ENCODE measurements at regions of chr17 and their contacts with region 1.

Region 1: GRCh38 chr17:49952209-49952911 is 16.6 kb upstream of the DLX4 start:
- DNase-seq: peak; percentile 87
- H3K4me3 ChIP-seq: peak overlapping the region in 1 of 2 experiments; percentile 1; a peak in 1 of 4 replicates
- H3K27ac ChIP-seq: no peak overlapping the region
- H3K4me1 ChIP-seq: no peaks in the 10 kb centered on the region
- H3K27me3 ChIP-seq: peaks cover 81% of the 10 kb centered on the region
- CTCF ChIP-seq: peak; percentile 99
- EP300 ChIP-seq: no peak
- RAD21 ChIP-seq: peak; percentile 74

Region 2: DNA sequence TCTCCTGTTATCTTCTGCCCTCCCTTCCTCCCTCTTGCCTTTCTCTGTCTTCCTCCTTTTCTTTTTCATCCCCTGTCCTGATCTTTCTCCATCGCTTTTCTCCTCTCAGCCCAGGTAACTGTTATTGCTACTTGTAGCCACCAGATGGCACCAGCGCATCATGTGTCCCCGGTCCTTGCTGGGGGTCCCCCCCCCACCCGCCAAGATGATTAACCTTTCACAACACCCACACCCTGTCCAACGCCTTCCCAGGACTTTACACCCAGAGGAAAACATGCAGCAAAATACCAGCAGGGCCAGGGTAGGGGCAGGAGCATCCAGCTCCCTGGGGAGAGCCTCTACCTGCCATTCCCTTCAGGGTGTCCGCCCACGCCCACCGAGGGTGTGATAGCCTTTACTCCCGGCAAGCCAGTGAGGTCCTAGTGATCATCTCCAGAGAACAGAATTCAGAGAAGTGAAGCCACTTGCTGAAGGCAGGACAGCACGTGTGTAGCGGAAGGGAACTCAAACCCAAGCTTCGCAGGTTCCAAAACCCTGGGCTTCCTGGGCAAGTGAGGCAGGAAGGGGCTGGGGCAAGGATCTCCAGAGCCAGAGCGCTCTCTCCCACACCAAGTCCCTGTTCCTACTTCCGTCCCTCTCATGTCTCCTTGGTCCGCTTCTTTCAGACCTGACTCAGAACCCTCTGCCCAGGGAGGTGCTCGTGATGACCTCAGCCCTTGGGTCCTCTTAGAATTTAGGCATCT is 91.0 kb before region 1 on chr17:
- CTCF ChIA-PET with region 1: interaction called, 15 read pairs
- POLR2A ChIA-PET with region 1: no interaction called
- DNase-seq: peak; percentile 93
- H3K4me3 ChIP-seq: no peak overlapping the region
- H3K27ac ChIP-seq: no peak overlapping the region
- H3K4me1 ChIP-seq: no peaks in the 10 kb centered on the region
- H3K27me3 ChIP-seq: peaks cover 6% of the 10 kb centered on the region; the same call in 1 of the 2 replicates
- CTCF ChIP-seq: peak; percentile 85
- EP300 ChIP-seq: no peak
- RAD21 ChIP-seq: peak; percentile 84

Region 3: DNA sequence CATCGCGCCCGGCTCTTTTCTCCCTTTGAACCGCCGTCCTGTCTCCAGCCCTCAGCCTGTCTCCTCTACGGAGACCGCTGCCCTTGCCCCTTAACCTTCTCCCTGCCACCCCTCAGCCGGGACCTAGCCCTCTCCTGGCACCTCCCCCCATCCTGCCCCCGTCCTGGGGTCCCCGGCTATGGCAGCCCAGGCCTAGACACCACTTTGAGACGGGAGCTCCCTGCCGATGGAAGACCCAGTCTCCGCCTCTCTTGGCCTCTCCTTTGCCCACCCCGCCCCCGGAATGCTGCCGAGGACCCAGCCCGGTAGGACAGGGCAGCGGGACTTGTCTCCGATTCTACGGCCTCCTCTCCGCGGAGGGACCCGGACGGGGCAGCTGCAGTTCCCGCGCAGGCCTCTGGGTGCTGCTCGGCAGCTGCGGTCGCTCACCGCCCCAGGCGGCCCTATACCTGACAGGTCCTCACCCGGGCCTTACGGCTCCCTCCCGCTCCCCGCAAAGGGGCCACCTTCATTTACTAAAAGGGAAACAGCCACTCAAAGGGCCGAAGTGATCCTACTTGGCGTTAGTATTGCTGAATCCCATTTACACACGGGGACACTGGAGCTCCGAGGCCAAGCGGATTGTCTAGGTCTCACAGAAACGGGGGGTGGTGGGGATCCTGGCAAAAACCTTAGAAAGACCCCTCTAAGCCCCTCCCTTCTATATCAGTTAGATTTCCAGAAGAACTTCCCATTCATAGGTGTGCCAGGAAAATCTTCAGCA is 71.9 kb before region 1 on chr17:
- CTCF ChIA-PET with region 1: interaction called, 38 read pairs
- POLR2A ChIA-PET with region 1: no interaction called
- DNase-seq: peak; percentile 97
- H3K4me3 ChIP-seq: peak overlapping the region in 1 of 2 experiments; percentile 13; a peak in 2 of 4 replicates
- H3K27ac ChIP-seq: no peak overlapping the region
- H3K4me1 ChIP-seq: peaks cover 0 to 9% of the 10 kb centered on the region in 2 experiments; a peak in 1 of 4 replicates
- H3K27me3 ChIP-seq: peaks cover 78% of the 10 kb centered on the region
- CTCF ChIP-seq: peak; percentile 96
- EP300 ChIP-seq: no peak
- RAD21 ChIP-seq: peak; percentile 86

Region 4: DNA sequence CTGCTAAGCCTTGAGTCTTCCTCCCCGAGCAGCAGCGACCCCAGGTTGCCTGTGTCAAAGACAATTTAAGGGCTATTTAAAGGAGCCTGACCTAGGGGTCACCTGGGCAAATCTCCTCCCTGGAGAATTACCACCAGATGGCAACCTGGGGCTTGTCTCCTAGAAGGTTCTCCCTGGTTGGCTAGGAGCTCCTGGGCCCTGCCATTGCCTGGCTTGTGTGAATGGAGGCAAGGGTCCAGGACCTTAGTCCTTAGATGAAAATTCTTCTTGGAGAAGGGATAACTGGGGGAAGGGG is 53.2 kb before region 1 on chr17:
- CTCF ChIA-PET with region 1: interaction called, 27 read pairs
- POLR2A ChIA-PET with region 1: no interaction called
- DNase-seq: no peak
- H3K4me3 ChIP-seq: no peak overlapping the region
- H3K27ac ChIP-seq: no peak overlapping the region
- H3K4me1 ChIP-seq: no peaks in the 10 kb centered on the region; a peak in 1 of 4 replicates
- H3K27me3 ChIP-seq: peaks cover 98% of the 10 kb centered on the region
- CTCF ChIP-seq: peak; percentile 35
- EP300 ChIP-seq: no peak
- RAD21 ChIP-seq: no peak; the same call in 1 of the 2 replicates

Region 5: DNA sequence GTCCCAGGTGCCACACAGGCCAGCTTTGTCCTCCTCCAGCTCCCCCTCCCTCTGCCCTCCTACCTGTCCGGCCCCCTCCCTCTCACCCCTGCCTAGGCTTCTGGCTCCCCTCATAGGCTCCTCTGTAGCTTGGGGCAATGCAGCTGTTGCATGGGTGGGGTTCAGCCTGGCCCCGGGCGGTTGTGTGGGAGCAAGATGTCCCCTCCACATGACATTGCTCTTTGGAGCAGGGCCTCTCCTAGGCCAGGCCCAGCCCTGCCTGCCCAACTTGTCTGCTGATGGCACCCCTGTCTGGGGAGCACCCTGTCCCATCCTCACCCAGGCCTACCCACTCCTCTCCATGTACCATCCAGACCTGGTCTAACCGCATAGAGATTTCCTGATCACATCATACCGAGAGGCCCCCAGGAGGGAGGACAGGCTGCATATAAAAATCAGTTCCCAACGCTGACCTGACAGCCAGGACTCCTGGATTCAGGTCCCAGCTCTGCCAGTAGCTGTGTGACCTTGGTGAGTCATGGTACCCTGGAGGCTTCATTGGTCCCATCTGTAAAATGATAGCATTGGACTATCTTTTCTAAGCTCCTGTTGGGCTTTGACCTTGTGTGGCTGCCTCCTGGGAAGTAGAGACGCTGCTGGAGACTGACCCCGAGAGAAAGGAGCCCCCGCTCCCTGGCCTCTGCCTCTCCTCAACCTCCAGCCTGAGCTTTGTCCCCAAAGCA is 32.1 kb before region 1 on chr17:
- CTCF ChIA-PET with region 1: interaction called, 258 read pairs
- POLR2A ChIA-PET with region 1: no interaction called
- DNase-seq: no peak
- H3K4me3 ChIP-seq: no peak overlapping the region
- H3K27ac ChIP-seq: no peak overlapping the region
- H3K4me1 ChIP-seq: no peaks in the 10 kb centered on the region
- H3K27me3 ChIP-seq: peaks cover 82% of the 10 kb centered on the region
- CTCF ChIP-seq: no peak
- EP300 ChIP-seq: no peak
- RAD21 ChIP-seq: no peak

Region 6: DNA sequence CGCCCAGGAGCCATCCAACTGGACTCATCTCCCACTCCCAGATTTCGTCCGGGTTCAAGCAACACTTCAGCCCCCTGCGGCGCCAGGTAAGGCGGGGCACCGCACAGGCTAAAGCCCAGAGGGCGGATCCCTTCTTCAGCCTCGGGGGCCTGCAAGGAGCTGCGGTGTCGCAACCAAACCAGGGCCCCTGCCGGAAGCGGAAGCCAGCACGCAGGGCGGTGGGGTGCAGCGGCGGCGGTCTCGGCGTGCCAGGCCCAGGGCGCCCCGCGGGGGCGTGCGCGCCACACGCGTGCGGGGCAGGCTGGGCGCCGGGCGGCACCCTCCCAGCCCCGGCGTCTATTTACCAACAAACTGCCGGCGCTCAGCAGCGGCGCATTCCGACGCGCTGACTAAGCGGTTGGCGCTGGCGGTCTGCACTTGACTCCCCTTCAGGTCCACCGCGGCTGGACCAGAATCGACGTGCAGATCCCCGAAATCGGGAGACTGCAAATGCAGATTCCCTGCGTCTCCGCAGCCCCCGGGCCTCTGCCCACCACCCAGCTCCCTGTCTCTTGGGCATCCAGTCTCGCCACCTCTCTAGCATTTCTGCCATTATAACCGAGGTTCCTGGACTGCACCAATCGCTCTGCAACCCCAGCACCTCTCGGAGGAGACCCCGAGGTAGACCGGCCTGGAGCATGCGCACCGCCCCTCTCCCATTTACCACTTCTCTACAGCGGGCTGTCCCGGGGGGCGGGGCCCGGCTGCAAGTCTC is 16.2 kb after region 1 on chr17:
- CTCF ChIA-PET with region 1: interaction called, 67 read pairs
- POLR2A ChIA-PET with region 1: no interaction called
- DNase-seq: peak; percentile 97
- H3K4me3 ChIP-seq: peak overlapping the region; percentile 50
- H3K27ac ChIP-seq: no peak overlapping the region
- H3K4me1 ChIP-seq: peaks cover 0 to 13% of the 10 kb centered on the region in 2 experiments; a peak in 1 of 4 replicates
- H3K27me3 ChIP-seq: peaks cover 100% of the 10 kb centered on the region
- CTCF ChIP-seq: no peak
- EP300 ChIP-seq: no peak
- RAD21 ChIP-seq: no peak

Measured in SK-N-SH (cell line).